MCF 10A (cell line): ENCODE measurements at regions of chr2 and their contacts with region 1.

Region 1: DNA sequence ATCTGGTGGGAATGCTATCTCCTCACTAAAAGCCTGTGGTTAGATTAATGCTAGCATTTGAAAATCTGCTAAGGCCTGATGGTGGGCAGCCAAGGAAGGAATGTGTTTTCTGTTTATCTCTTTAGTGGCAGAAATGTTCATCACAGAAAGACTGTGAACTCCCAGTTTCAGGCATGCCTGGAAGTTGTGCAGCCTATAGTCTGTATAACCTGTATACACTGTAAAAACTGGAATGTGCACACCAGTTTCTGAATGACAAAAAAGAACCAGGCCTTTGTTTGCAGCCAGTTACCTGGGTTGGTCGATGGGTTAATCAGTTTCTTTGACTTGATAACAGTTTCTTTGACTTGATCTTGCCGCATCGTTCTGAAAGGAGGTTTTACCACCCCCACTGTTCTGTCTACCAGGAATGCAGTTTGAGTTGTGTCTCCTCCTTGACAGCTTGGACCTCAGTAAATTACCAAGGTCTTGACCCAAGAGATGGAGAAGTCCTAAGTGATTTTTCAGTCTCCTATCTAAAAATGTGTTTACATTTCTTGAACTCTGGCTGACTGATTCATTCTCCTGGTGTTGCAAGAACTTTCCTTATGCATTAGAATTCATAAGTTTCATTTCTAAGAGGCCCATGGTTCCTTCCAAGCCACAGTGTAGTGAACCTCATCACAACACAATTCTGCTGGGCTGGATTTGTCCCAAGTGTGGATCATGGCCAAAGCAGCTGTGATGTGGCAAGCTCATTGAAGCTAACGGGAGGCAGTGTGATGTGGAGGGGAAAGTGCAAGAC is 62.2 kb downstream of the KIAA2012 start:
- DNase-seq: peak; percentile 86
- H3K4me3 Mint-ChIP-seq: no peak overlapping the region
- H3K27ac Mint-ChIP-seq: no peak overlapping the region
- H3K4me1 Mint-ChIP-seq: peaks cover 5% of the 10 kb centered on the region
- H3K27me3 Mint-ChIP-seq: no peaks in the 10 kb centered on the region
- CTCF ChIP-seq: no peak

Region 2: GRCh38 chr2:201580486-201580885 is 554.8 kb before region 1 on chr2:
- CTCF ChIA-PET with region 1: no interaction called
- POLR2A ChIA-PET with region 1: no interaction called
- intact Hi-C with region 1: no loop called
- DNase-seq: peak; percentile 76
- H3K4me3 Mint-ChIP-seq: peak overlapping the region; percentile 16
- H3K27ac Mint-ChIP-seq: peak overlapping the region; percentile 63
- H3K4me1 Mint-ChIP-seq: peaks cover 13% of the 10 kb centered on the region
- H3K27me3 Mint-ChIP-seq: peaks cover 5% of the 10 kb centered on the region
- CTCF ChIP-seq: no peak

Region 3: GRCh38 chr2:202033321-202034248 is 101.7 kb before region 1 on chr2 and contains the start of gene FZD7:
- CTCF ChIA-PET with region 1: no interaction called
- POLR2A ChIA-PET with region 1: no interaction called
- intact Hi-C with region 1: loop called (anchors 10 kb)
- DNase-seq: peak; percentile 93
- H3K4me3 Mint-ChIP-seq: no peak within 1 kb of the TSS
- H3K27ac Mint-ChIP-seq: peak within 1 kb of the TSS; percentile 72
- H3K4me1 Mint-ChIP-seq: peaks cover 7% of the 10 kb centered on the region
- H3K27me3 Mint-ChIP-seq: no peaks in the 10 kb centered on the region
- CTCF ChIP-seq: no peak
- total RNA-seq, gene FZD7: 1.1 and 1.8 TPM in 2 replicates

Region 4: DNA sequence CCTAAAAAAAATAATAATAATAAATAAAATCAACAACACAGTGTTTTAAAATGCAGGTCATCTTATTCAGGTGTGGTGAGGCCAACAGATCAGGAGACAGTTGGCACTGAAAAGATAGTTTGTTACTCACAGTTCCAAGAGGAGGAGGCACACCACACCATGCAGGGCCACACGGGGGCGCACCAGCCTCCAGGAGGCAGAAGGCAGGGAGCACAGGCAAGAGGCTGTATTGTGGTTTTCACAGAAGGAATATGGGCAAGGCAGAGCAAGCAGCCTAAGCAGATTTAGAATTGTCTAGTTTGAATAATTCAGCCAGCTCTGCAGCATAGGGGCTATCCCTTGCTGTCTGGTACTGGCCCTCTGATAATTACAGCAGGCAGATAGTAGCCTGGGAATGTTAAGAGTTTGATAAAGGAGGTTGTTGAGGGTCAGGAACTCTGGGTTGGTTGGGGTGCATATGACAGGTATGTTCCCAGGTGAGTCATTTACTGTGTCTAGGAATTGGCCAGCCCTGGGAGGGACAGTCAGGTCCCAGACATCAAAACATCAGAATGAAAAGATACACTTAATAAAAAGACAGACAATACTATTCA is 30.9 kb before region 1 on chr2:
- CTCF ChIA-PET with region 1: no interaction called
- POLR2A ChIA-PET with region 1: no interaction called
- intact Hi-C with region 1: loop called (anchors 2 kb)
- DNase-seq: peak; percentile 69
- H3K4me3 Mint-ChIP-seq: no peak overlapping the region
- H3K27ac Mint-ChIP-seq: no peak overlapping the region
- H3K4me1 Mint-ChIP-seq: no peaks in the 10 kb centered on the region
- H3K27me3 Mint-ChIP-seq: peaks cover 18% of the 10 kb centered on the region
- CTCF ChIP-seq: peak; percentile 55